ENCODE measurements at regions of chr12 and their contacts with region 1.

Region 1: DNA sequence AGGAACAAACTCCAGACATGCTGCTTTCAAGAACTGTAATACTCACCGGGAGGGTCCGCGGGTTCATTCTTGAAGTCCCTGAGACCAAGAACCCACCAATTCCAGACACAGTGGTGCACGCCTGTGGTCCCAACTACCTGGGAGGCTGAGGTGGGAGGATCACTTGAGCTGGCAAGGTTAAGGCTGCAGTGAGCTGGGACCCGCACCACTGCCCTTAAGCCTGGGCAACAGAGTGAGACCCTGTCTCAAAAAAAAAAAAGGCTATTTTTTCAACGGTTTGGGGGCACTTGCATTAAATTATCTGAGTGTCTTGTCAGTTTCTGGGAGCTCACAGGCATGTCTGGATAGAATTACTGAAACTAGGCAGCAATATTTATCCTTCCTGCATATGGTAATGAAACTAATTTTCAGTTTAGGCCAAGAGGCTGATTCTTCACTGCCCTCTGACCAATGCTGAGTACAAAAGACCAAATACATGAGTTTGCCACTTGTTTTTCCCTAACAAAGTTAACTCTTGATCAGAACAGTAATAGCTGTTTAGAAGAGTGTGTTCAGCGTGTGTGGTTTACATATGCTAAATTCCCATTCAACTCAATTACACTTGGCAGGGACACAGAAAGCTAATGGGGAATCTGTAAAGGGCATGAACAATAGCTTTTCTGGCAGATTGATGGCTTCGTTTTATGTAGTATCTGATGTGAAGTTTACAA is 65.8 kb upstream of the RASSF3 start:
- DNase-seq: no peak
- H3K4me3 Mint-ChIP-seq: no peak overlapping the region
- H3K27ac Mint-ChIP-seq: no peak overlapping the region
- H3K4me1 Mint-ChIP-seq: peaks cover 2% of the 10 kb centered on the region
- H3K27me3 Mint-ChIP-seq: peaks cover 9% of the 10 kb centered on the region

Region 2: DNA sequence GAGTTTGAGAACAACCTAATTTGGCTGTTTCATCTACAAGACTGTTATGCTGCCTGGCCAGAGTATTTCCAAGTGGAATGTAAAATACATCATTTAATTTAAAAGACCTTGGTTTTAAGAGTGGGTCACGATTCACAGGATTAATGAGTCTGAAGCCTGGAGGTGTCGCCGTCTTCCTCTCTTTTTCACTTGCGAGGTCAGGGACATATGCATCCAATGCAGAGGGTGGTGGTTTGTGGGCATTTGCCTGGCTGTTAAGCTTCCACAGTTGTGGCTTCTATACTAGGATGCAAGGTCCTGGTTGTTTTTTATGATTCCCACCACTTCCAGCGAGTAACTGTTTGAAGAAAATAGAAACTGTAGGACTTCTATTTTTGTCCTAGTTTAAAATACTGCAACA is 42.9 kb after region 1 on chr12:
- intact Hi-C with region 1: no loop called
- DNase-seq: no peak
- H3K4me3 Mint-ChIP-seq: no peak overlapping the region
- H3K27ac Mint-ChIP-seq: no peak overlapping the region
- H3K4me1 Mint-ChIP-seq: peaks cover 11% of the 10 kb centered on the region
- H3K27me3 Mint-ChIP-seq: peaks cover under 1% of the 10 kb centered on the region

Region 3: GRCh38 chr12:64696080-64696741 is 151.7 kb after region 1 on chr12:
- intact Hi-C with region 1: loop called (anchors 1 kb)
- DNase-seq: no peak
- H3K4me3 Mint-ChIP-seq: no peak overlapping the region
- H3K27ac Mint-ChIP-seq: no peak overlapping the region
- H3K4me1 Mint-ChIP-seq: peaks cover 58% of the 10 kb centered on the region
- H3K27me3 Mint-ChIP-seq: no peaks in the 10 kb centered on the region

Region 4: DNA sequence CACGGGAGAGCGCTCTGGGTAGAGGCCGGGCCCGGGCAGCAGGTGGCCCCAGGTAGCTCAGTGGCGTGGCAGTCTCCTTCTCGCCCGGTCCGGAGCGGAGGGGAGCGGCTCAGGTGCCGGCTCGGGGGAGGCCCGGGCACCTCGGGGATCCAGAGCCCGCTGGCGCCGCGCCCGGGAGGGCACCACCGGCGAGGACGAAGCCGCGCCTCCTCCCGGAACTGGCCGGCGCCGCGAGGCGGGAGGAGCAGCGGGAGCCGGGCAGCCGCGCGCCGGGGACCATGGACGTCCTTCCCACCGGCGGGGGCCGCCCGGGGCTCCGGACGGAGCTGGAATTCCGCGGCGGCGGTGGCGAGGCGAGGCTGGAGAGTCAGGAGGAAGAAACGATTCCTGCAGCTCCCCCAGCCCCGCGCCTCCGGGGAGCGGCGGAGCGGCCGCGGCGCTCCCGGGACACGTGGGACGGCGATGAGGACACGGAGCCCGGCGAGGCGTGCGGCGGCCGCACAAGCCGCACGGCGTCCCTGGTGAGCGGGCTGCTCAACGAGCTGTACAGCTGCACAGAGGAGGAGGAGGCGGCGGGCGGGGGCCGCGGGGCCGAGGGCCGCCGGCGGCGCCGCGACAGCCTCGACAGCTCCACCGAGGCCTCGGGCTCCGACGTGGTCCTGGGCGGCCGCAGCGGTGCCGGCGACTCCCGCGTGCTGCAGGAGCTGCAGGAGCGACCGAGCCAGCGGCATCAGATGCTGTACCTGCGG is 236.2 kb after region 1 on chr12:
- intact Hi-C with region 1: loop called (anchors 10 kb)
- DNase-seq: peak; percentile 69
- H3K4me3 Mint-ChIP-seq: peak overlapping the region; percentile 82
- H3K27ac Mint-ChIP-seq: no peak overlapping the region
- H3K4me1 Mint-ChIP-seq: peaks cover 10% of the 10 kb centered on the region
- H3K27me3 Mint-ChIP-seq: peaks cover 76% of the 10 kb centered on the region